Activated B cell treated with CpG ODN at 0.5 μM for 24 hours (primary cell): ENCODE measurements at regions of chr15 and their contacts with region 1.

Region 1: DNA sequence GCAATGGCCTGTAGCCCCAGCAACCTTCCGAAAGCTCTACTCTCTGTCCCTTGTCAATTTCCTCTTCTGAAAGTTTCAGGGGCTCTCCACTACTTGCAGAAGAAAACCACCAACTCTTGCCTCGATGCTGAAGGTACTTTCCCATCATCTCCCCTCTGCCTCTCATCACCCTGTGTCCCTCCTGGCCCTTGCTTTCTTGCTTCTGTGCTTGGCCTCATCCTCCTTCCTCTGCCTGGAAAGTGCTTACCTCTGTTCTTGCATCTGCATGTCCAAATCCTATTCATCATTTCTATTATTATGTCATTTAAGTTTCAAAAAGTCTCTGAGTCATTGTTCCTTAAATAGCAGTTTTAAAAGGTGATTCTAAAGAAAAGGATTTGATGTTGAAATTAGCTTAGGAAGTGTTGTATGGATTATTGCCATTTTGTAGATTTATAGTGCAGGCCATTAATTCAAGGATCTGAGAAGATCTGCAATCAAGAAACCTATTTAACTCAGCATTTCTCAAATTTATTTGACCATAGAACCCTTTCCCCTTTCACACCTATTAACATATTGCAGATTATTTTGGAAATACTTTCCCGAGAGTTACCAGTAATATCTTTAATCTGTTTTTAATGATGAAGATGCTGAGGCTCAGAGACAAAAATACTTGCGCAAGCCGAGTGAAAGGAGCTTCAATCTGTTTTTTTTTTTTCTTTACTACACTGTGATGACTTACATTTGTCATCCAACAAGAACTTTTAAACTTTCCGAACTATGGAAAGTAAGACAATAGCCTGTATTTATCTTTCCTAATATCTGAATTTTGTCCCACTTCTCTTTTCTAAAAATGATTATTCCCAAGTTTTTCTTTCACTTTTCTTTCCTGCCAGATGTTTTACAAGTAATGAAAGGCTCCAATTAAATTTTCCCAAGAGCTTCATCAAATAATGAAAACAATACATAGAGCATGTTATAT is 22.3 kb upstream of the CFAP161 start:
- DNase-seq: no peak
- ATAC-seq: peak; percentile 91
- H3K4me3 Mint-ChIP-seq: peak overlapping the region; percentile 56
- H3K27ac Mint-ChIP-seq: peak overlapping the region; percentile 72
- H3K4me1 Mint-ChIP-seq: peaks cover 16% of the 10 kb centered on the region
- H3K27me3 Mint-ChIP-seq: peaks cover 9% of the 10 kb centered on the region
- CTCF ChIP-seq: no peak

Region 2: GRCh38 chr15:81023483-81024264 is 88.1 kb before region 1 on chr15:
- CTCF ChIA-PET with region 1: interaction called, 3 read pairs
- POLR2A ChIA-PET with region 1: no interaction called
- intact Hi-C with region 1: loop called (anchors 1 kb)
- DNase-seq: peak; percentile 35
- ATAC-seq: peak; percentile 82
- H3K4me3 Mint-ChIP-seq: peak overlapping the region; percentile 78
- H3K27ac Mint-ChIP-seq: peak overlapping the region; percentile 91
- H3K4me1 Mint-ChIP-seq: peaks cover 18% of the 10 kb centered on the region
- H3K27me3 Mint-ChIP-seq: no peaks in the 10 kb centered on the region
- CTCF ChIP-seq: no peak

Region 3: DNA sequence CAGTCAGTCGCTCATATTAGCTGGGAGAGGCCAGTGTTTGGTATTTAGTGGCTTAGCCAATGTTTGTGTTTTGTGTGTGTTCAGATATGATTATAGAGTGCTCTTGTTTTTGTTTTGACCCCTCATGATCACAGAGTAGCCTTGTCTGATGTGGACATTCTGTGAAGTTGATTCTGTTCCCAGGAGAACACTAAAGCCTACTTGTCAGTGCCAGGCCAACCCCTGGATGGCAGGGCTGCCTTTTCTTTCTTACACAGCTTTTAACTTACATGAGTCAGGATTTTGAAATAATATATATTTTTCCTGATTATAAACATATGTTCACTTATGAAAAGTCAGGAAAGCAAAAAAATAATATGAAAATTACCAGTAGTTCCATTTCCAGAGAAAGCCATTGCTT is 34.2 kb after region 1 on chr15:
- CTCF ChIA-PET with region 1: interaction called, 4 read pairs
- POLR2A ChIA-PET with region 1: no interaction called
- intact Hi-C with region 1: loop called (anchors 2 kb)
- DNase-seq: no peak
- ATAC-seq: no peak
- H3K4me3 Mint-ChIP-seq: no peak overlapping the region
- H3K27ac Mint-ChIP-seq: no peak overlapping the region
- H3K4me1 Mint-ChIP-seq: peaks cover 8% of the 10 kb centered on the region
- H3K27me3 Mint-ChIP-seq: peaks cover 2% of the 10 kb centered on the region
- CTCF ChIP-seq: no peak

Region 4: GRCh38 chr15:81400640-81401236 is 288.9 kb after region 1 on chr15:
- CTCF ChIA-PET with region 1: interaction called, 7 read pairs
- POLR2A ChIA-PET with region 1: no interaction called
- intact Hi-C with region 1: loop called (anchors 1 kb)
- DNase-seq: no peak
- ATAC-seq: peak; percentile 58
- H3K4me3 Mint-ChIP-seq: no peak overlapping the region
- H3K27ac Mint-ChIP-seq: no peak overlapping the region
- H3K4me1 Mint-ChIP-seq: no peaks in the 10 kb centered on the region
- H3K27me3 Mint-ChIP-seq: no peaks in the 10 kb centered on the region
- CTCF ChIP-seq: peak; percentile 31

Region 5: DNA sequence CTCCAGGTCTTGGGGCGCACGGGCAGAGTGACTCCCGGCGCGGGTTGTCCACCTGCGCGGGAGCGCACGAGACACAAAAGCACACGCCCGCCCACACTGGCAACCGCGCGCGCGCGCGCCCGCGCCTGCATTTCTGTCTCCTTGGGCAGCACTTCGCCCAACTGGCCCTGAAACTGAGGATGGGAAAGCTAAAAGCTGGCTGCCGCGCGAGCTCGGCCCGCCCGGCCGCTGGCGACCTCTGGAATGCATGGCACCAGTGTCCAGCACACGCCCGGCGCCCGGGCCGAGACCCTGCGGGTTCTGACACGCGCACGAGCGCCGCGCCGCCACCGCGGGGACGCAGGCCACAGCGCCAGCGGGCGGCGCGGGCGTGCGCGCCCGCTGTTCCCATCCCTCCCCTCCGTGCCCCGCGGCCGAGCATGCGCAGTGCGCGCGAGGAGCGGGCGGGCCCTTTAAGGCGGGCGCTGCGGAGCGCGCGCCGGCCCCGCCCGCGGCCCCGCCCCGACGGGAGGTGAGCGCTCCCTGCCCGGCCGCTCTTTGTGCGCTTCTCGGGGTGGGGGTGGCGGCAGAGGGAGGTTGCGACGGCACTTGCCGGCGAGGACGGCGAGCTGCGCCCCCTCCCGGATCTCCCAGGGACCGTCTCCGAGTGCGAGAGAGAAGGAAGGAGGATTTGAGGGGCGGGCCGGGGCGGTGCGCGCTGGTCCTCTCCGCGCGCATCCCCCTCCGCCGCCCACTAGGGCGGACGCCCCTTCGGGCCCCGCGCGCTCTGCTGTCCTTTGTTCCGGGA is 935.1 kb after region 1 on chr15:
- CTCF ChIA-PET with region 1: no interaction called
- POLR2A ChIA-PET with region 1: no interaction called
- intact Hi-C with region 1: loop called (anchors 10 kb)
- DNase-seq: peak; percentile 84
- ATAC-seq: peak; percentile 81
- H3K4me3 Mint-ChIP-seq: peak overlapping the region; percentile 89
- H3K27ac Mint-ChIP-seq: peak overlapping the region; percentile 66
- H3K4me1 Mint-ChIP-seq: peaks cover 16% of the 10 kb centered on the region
- H3K27me3 Mint-ChIP-seq: peaks cover 27% of the 10 kb centered on the region
- CTCF ChIP-seq: no peak